ENCODE measurements at regions of chr1 and their contacts with region 1.

Region 1: DNA sequence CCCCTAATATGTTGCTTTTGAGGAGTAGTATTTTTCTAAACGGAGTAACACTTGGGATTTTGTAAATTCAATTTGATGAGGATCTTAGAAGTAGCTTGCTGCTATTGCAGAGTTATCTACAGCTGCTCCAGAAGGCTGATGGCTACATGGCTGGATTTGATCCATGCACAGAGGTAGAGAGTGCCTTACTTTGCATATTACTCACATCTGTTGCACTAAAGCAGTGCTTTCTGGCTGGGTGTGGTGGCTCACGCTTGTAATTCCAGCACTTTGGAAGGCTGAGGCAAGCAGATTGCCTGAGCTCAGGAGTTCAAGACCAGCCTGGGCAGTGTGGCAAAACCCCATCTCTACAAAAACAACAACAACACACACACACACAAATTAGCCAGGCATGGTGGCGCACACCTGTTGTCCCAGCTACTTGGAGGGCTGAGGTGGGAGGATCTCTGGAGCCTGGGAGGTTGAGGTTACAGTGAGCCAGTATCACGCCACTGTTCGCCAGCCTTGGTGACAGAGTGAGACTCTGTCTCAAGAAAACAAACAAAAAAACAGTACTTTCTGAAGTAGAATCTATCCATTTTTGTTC is 24.6 kb downstream of the RALGPS2 start:
- DNase-seq: no peak
- ATAC-seq: no peak
- H3K4me3 ChIP-seq: no peak overlapping the region
- H3K4me3 Mint-ChIP-seq: no peak overlapping the region
- H3K27ac ChIP-seq: no peak overlapping the region
- H3K27ac Mint-ChIP-seq: no peak overlapping the region
- H3K4me1 ChIP-seq: no peaks in the 10 kb centered on the region
- H3K4me1 Mint-ChIP-seq: peaks cover 3% of the 10 kb centered on the region
- H3K27me3 ChIP-seq: no peaks in the 10 kb centered on the region
- H3K27me3 Mint-ChIP-seq: no peaks in the 10 kb centered on the region
- CTCF ChIP-seq: no peak

Region 2: GRCh38 chr1:178532392-178532791 is 217.3 kb before region 1 on chr1:
- CTCF ChIA-PET with region 1: interaction called, 22 read pairs
- POLR2A ChIA-PET with region 1: no interaction called
- intact Hi-C with region 1: loop called in 1 of 2 experiments (anchors 1 kb)
- DNase-seq: peak; percentile 48 to 86 (median 72)
- ATAC-seq: peak; percentile 73
- H3K4me3 ChIP-seq: no peak overlapping the region
- H3K4me3 Mint-ChIP-seq: no peak overlapping the region
- H3K27ac ChIP-seq: no peak overlapping the region
- H3K27ac Mint-ChIP-seq: no peak overlapping the region
- H3K4me1 ChIP-seq: peaks cover 6% of the 10 kb centered on the region
- H3K4me1 Mint-ChIP-seq: peaks cover 4% of the 10 kb centered on the region
- H3K27me3 ChIP-seq: no peaks in the 10 kb centered on the region
- H3K27me3 Mint-ChIP-seq: peaks cover 2% of the 10 kb centered on the region
- CTCF ChIP-seq: peak; percentile 92

Region 3: DNA sequence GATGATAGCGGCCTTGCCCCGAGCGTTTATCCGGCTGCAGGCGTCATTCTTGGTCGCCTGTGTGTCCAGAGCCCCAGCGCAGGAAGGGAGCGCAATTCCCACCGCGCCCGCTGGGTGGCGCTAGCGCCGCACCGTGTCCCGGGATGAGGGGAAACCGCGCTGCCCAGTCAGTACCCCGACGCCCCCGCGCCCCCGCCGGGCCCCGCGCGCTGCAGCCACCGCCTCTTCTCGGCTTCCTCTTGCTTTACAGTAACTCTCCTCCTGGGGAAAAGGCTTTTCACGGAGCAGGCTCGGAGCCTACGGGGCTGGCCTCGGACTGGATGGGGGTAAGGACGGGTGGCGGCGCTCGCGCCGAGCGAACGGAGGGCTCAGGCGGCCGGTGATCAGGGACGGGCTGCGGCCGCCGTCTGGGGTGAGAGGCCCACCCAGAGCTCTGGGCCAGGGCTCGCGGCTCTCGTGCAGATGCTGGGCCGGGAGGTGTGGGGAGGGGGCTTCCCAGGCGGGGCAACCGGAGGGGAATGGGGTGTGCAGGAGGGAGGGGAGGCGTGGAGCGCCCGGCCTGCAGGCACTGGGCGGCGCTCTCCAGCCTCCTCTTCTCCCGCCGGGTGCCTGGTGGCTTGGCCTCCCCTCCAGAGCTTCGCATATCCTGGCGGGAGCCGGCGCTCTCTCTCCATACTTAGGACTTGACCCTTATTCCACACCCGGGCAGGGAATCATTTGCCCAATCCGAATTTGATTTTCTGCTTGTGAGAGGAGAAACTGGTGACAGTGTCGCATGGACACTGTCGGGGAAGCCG is 206.9 kb before region 1 on chr1:
- CTCF ChIA-PET with region 1: interaction called, 9 read pairs
- POLR2A ChIA-PET with region 1: no interaction called
- intact Hi-C with region 1: loop called (anchors 1 kb)
- DNase-seq: peak; percentile 68 to 96 (median 85)
- ATAC-seq: peak; percentile 92
- H3K4me3 ChIP-seq: peak overlapping the region; percentile 75 to 92
- H3K4me3 Mint-ChIP-seq: peak overlapping the region; percentile 90
- H3K27ac ChIP-seq: peak overlapping the region in 1 of 2 experiments; percentile 22
- H3K27ac Mint-ChIP-seq: peak overlapping the region; percentile 62
- H3K4me1 ChIP-seq: peaks cover 11% of the 10 kb centered on the region
- H3K4me1 Mint-ChIP-seq: peaks cover 9% of the 10 kb centered on the region
- H3K27me3 ChIP-seq: no peaks in the 10 kb centered on the region
- H3K27me3 Mint-ChIP-seq: no peaks in the 10 kb centered on the region
- CTCF ChIP-seq: peak; percentile 98

Region 4: GRCh38 chr1:178706432-178706831 is 43.2 kb before region 1 on chr1:
- CTCF ChIA-PET with region 1: interaction called, 3 read pairs
- POLR2A ChIA-PET with region 1: no interaction called
- intact Hi-C with region 1: loop called in 1 of 2 experiments (anchors 5 kb)
- DNase-seq: no peak
- ATAC-seq: no peak
- H3K4me3 ChIP-seq: no peak overlapping the region
- H3K4me3 Mint-ChIP-seq: no peak overlapping the region
- H3K27ac ChIP-seq: no peak overlapping the region
- H3K27ac Mint-ChIP-seq: no peak overlapping the region
- H3K4me1 ChIP-seq: no peaks in the 10 kb centered on the region
- H3K4me1 Mint-ChIP-seq: no peaks in the 10 kb centered on the region
- H3K27me3 ChIP-seq: no peaks in the 10 kb centered on the region
- H3K27me3 Mint-ChIP-seq: peaks cover 31% of the 10 kb centered on the region
- CTCF ChIP-seq: no peak